Activated CD4-positive, alpha-beta T cell treated with anti-CD3 and anti-CD28 coated beads for 36 hours (primary cell): ENCODE measurements at regions of chr3 and their contacts with region 1.

Region 1: DNA sequence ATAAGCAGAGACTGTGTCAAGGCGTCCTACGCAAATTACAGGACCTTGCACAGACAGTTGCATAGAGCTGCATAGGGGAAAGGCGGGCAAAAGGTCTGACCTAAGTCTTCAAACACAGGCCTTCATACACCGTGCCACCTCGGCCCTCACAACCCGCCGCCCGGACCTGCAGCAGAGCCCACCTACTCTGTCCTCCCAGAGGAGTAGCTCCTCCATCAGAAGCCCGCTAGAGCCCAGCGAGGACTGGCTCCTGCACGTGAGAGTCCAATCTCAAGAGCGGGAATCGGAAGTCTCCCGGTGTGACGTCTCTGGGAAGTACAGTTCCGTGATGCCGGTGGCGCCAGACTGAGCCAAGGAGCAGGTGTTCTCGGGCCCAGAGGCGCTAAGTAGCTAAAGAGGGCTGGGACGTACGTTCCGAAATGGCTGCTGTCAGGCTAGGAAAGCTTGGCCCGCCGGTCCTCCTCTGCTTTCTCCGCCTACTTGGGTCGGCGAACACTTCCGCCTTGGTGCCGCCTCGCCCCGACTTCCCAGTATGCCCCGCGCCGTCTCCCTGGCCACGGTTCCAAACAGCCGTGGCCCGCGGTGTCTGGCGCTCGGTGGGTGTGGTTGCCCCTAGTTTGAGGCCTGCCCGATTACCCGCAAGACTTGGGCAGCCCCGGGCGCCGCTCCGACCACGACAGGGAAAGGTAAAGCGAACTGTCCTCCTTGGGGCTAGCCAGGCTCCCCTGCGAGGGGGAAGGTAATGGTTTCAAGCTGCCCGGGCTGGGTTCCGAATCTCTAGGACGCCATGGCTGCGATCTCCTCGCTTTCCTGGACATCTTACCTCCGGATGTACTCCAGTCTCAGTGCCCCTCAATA is at the starts of genes ASTE1 and NEK11:
- DNase-seq: peak; percentile 95
- ATAC-seq: peak; percentile 98
- H3K4me3 Mint-ChIP-seq: peak within 1 kb of the TSS; percentile 90
- H3K27ac Mint-ChIP-seq: peak within 1 kb of the TSS; percentile 96
- H3K4me1 Mint-ChIP-seq: peaks cover 46% of the 10 kb centered on the region
- H3K27me3 Mint-ChIP-seq: no peaks in the 10 kb centered on the region
- total RNA-seq, gene ASTE1: 8.2 to 9.1 TPM
- total RNA-seq, gene NEK11: 1.0 to 1.3 TPM

Region 2: DNA sequence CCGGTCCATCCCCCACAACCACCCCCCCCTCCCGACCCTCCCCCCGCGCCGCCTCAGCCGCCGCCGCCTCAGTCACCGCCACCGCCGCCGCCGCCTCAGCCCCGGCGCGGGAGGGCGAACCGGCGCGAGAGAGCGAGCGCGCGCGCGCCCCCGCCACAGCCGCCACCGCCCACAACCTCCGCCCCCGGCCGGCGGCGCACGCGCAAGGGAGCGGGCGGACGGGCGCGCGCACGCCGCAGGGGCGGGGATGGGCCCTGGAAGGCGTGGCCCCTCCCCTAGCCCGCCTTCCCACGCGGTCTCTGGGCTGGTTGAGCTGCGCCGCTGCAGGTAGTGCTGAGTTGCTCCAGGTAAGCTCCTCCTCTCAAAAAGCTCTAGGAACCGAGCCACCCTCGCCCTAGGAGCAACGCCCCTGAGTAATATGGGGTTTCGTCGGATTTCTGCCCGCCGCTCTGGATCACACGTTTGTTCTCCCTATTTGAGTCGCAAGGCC is 1132.9 kb before region 1 on chr3 and contains the start of gene TMCC1:
- CTCF ChIA-PET with region 1: no interaction called
- POLR2A ChIA-PET with region 1: no interaction called
- intact Hi-C with region 1: loop called in 1 of 2 experiments (anchors 10 kb)
- DNase-seq: peak; percentile 92
- ATAC-seq: peak; percentile 92
- H3K4me3 Mint-ChIP-seq: peak within 1 kb of the TSS; percentile 86
- H3K27ac Mint-ChIP-seq: peak within 1 kb of the TSS; percentile 85
- H3K4me1 Mint-ChIP-seq: peaks cover 36% of the 10 kb centered on the region
- H3K27me3 Mint-ChIP-seq: no peaks in the 10 kb centered on the region
- total RNA-seq, gene TMCC1: 14.8 to 17.3 TPM

Region 3: DNA sequence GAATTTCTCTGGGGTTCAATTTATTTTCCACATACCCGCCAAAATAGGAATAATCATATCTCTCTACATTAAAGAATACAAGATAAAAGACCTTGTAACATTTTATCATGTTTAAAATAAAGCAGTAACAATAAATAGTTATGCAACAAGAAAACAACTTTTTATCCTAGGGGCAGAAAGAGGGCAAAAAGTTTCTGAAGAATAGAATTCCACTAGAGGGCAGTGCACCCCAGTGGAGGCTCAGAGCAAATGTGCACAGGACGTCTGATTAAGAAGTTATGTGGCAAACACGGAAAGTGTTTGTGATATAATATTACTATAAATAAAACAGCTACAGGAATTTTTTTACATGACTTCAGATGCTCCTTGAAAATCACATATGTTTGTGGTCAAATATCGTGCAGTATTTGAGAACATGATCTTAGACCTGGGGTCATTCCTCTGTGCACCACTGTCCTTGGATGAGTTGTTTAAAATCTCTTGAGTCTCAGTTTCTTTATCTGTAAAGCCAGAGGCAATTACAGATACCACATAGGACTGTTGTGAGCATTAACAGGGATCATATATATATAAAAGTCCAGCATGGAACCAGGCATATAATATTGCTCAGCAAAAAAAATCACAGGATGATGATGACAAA is 266.7 kb before region 1 on chr3:
- CTCF ChIA-PET with region 1: no interaction called
- POLR2A ChIA-PET with region 1: no interaction called
- intact Hi-C with region 1: loop called in 1 of 2 experiments (anchors 5 kb)
- DNase-seq: peak; percentile 72
- ATAC-seq: peak; percentile 86
- H3K4me3 Mint-ChIP-seq: no peak overlapping the region
- H3K27ac Mint-ChIP-seq: no peak overlapping the region
- H3K4me1 Mint-ChIP-seq: no peaks in the 10 kb centered on the region
- H3K27me3 Mint-ChIP-seq: peaks cover 3% of the 10 kb centered on the region

Region 4: DNA sequence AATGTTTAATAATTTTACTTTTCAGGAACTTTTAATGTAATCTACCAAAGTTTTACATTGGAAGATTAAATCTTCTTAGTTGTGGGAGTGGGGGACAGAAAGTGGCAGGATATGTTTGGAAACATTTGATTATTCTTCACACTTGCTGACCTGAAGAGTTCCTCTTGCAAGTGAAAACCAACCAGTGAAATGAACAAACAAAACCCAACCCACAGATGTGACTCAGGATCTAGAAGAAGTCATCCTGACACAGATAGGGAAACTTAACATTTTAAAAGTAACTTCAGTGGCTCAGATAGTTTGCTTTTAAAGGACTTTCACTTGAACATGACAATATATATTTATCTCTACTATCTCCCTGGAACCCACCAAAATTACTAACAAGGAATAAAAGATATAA is 55.3 kb before region 1 on chr3:
- CTCF ChIA-PET with region 1: no interaction called
- POLR2A ChIA-PET with region 1: no interaction called
- intact Hi-C with region 1: no loop called
- DNase-seq: no peak
- ATAC-seq: peak; percentile 70
- H3K4me3 Mint-ChIP-seq: no peak overlapping the region
- H3K27ac Mint-ChIP-seq: no peak overlapping the region
- H3K4me1 Mint-ChIP-seq: peaks cover 9% of the 10 kb centered on the region
- H3K27me3 Mint-ChIP-seq: no peaks in the 10 kb centered on the region

Region 5: DNA sequence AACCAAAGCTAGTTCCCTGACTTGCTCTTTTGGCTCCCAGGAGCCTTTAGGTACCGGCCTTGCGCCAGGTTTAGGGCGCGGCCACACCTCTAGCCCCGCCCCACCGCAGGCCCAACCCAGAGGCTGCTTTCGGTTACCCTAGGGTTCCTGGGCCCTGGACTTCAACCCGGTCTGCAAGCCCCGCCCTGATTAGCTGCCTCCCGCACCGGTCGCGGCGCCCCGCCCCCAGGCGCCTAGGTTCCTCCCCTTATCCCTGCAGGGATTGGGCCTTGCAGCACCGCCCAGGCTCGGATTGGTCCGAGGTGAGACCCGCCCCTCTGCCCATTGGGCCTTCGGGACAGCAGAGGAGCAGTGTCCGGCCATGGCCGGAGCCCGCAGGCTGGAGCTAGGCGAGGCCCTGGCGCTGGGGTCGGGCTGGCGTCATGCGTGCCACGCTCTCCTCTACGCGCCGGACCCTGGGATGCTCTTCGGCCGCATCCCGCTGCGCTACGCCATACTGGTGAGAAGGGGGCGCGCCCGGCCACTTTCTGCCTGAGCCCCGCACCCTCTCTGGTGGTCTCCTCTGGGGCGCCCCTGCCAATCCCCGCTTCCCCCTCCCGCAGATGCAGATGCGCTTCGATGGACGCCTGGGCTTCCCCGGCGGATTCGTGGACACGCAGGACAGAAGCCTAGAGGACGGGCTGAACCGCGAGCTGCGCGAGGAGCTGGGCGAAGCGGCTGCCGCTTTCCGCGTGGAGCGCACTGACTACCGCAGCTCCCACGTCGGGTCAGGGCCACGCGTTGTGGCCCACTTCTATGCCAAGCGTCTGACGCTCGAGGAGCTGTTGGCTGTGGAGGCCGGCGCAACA is 355.1 kb after region 1 on chr3 and contains the start of gene NUDT16:
- CTCF ChIA-PET with region 1: interaction called, 4 read pairs
- POLR2A ChIA-PET with region 1: no interaction called
- intact Hi-C with region 1: loop called (anchors 1 to 5 kb)
- DNase-seq: peak; percentile 98
- ATAC-seq: peak; percentile 100
- H3K4me3 Mint-ChIP-seq: peak within 1 kb of the TSS; percentile 90
- H3K27ac Mint-ChIP-seq: peak within 1 kb of the TSS; percentile 91
- H3K4me1 Mint-ChIP-seq: peaks cover 22% of the 10 kb centered on the region
- H3K27me3 Mint-ChIP-seq: no peaks in the 10 kb centered on the region
- total RNA-seq, gene NUDT16: 4.0 to 5.7 TPM

Region 6: GRCh38 chr3:131458653-131459052 is 432.1 kb after region 1 on chr3:
- CTCF ChIA-PET with region 1: no interaction called
- POLR2A ChIA-PET with region 1: no interaction called
- intact Hi-C with region 1: no loop called
- DNase-seq: no peak
- ATAC-seq: no peak
- H3K4me3 Mint-ChIP-seq: no peak overlapping the region
- H3K27ac Mint-ChIP-seq: peak overlapping the region; percentile 10
- H3K4me1 Mint-ChIP-seq: no peaks in the 10 kb centered on the region
- H3K27me3 Mint-ChIP-seq: no peaks in the 10 kb centered on the region

Region 7: DNA sequence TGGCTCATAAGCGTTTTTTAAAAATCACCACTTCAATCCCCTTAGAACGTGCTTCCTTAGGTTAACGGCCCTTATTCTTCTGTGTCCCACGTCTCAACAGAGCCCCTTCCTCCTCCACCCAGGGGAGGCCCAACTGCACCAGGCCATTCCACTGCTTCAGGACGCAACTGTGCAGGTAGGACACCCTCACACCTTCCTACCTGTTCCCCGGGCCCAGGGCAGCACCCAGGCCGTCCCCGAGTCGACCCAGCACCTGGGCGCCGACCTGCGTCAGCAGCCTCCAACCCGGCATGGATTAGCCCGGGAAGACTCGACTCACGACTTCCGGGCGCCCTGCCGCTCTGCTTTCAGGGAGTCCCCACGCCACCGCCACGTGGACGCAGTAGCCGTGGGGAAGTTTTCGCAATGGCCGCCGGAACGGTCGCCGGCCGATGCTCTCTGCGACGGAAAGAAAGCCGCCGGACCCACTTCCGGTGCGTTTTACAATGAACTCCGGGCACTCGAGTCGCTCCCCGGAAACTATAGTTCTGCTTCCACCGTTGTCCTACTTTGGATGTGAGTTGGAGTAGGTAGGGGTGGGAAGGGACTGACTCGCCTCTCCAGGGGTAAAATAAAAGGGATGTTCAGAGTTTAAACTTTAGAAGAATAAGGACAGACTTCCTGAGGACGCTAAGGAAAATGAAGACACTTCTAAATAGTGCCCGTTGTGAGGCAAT is 476.1 kb after region 1 on chr3 and contains the start of gene MRPL3:
- CTCF ChIA-PET with region 1: no interaction called
- POLR2A ChIA-PET with region 1: no interaction called
- intact Hi-C with region 1: loop called (anchors 1 to 2 kb)
- DNase-seq: peak; percentile 92
- ATAC-seq: peak; percentile 97
- H3K4me3 Mint-ChIP-seq: peak within 1 kb of the TSS; percentile 98
- H3K27ac Mint-ChIP-seq: peak within 1 kb of the TSS; percentile 93
- H3K4me1 Mint-ChIP-seq: peaks cover 33% of the 10 kb centered on the region
- H3K27me3 Mint-ChIP-seq: no peaks in the 10 kb centered on the region
- total RNA-seq, gene MRPL3: 166 to 278 TPM

Region 8: DNA sequence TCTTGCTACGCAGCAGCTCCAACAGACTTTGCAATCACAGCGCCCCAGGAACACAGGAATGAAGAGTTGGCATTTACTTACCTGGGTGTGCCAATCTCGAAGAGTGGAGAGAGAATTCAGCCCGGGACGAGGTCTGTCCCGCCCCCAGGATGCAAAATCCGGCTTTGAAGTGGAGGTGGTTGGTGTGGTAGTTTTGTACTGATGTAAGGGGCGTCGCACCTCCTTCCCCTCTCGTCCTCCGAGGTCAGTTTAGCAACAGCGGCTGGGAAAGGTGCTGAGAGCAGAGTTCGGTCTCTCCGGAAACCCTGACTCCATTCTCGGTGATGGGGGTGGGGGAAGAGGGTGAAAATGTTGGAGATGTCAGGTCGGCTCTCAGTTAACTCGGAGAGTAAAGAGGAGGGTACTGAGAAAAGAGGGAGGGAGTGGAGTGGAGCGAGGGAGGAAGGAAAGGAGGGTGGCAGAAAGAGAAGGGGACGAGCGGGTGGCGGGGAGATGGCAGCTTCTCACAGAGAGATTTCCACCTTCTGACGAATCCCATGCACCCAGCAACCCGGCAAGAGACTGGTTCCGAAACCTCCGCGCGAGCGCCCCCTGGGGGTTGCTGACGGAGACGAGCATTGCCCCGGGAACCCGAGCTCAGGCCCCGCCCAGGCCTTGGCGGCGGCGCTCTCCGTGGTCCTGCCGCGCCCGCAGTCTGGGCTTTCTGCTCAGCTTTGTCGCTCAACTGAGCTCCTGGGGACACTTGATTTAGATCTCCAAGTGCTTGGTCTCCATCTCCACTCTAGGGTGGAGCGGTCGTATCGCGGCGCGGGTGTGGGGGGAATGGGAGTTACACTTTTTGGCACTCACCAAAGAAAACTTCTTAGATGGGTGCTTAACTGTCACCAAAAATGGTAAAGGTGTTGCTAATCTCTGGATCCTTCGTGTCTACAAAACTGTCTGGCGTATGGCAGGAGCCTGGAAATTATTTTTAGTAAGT is 1008.2 kb after region 1 on chr3 and contains the start of gene CPNE4:
- CTCF ChIA-PET with region 1: no interaction called
- POLR2A ChIA-PET with region 1: no interaction called
- intact Hi-C with region 1: loop called in 1 of 2 experiments (anchors 2 kb)
- DNase-seq: peak; percentile 91
- ATAC-seq: peak; percentile 97
- H3K4me3 Mint-ChIP-seq: peak within 1 kb of the TSS; percentile 33
- H3K27ac Mint-ChIP-seq: no peak within 1 kb of the TSS
- H3K4me1 Mint-ChIP-seq: peaks cover 12% of the 10 kb centered on the region
- H3K27me3 Mint-ChIP-seq: peaks cover 62% of the 10 kb centered on the region
- total RNA-seq, gene CPNE4: not detected

Region 9: GRCh38 chr3:132416807-132417694 is 1390.5 kb after region 1 on chr3 and contains the start of gene DNAJC13:
- CTCF ChIA-PET with region 1: no interaction called
- POLR2A ChIA-PET with region 1: no interaction called
- intact Hi-C with region 1: loop called in 1 of 2 experiments (anchors 1 kb)
- DNase-seq: peak; percentile 95
- ATAC-seq: peak; percentile 94
- H3K4me3 Mint-ChIP-seq: peak within 1 kb of the TSS; percentile 87
- H3K27ac Mint-ChIP-seq: peak within 1 kb of the TSS; percentile 94
- H3K4me1 Mint-ChIP-seq: peaks cover 37% of the 10 kb centered on the region
- H3K27me3 Mint-ChIP-seq: no peaks in the 10 kb centered on the region
- total RNA-seq, gene DNAJC13: 29.9 to 33.5 TPM